Vagina (tissue), 2 donors: ENCODE measurements at regions of chr16 and their contacts with region 1.

Region 1: DNA sequence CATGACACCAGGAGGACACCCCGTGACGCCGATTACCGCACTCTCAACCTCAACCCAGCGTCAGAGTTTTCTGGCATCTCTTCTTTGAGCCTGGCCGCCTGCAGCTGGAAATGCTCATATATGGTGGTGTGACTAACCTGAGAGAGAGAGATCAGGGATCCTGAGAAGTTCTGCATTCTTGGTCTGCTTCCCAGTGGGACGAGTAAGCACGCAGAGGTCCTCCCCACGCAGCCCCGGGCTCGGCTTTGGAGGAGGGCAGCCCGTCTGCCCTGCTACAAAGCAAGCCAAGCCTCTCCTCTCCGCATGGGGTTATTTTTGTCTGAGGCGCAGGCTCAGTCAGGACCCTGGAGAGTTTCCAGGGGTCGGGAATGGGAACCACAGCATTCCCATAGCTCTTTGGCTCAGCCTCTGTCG is 16.5 kb downstream of the CRISPLD2 start:
- DNase-seq: no peak
- H3K4me3 ChIP-seq: peak overlapping the region in 1 of 2 donors; percentile 1
- H3K27ac ChIP-seq: peak overlapping the region; percentile 95
- H3K4me1 ChIP-seq: peaks cover 76% of the 10 kb centered on the region
- H3K27me3 ChIP-seq: no peaks in the 10 kb centered on the region
- CTCF ChIP-seq: no peak
- POLR2A ChIP-seq: no peak

Region 2: DNA sequence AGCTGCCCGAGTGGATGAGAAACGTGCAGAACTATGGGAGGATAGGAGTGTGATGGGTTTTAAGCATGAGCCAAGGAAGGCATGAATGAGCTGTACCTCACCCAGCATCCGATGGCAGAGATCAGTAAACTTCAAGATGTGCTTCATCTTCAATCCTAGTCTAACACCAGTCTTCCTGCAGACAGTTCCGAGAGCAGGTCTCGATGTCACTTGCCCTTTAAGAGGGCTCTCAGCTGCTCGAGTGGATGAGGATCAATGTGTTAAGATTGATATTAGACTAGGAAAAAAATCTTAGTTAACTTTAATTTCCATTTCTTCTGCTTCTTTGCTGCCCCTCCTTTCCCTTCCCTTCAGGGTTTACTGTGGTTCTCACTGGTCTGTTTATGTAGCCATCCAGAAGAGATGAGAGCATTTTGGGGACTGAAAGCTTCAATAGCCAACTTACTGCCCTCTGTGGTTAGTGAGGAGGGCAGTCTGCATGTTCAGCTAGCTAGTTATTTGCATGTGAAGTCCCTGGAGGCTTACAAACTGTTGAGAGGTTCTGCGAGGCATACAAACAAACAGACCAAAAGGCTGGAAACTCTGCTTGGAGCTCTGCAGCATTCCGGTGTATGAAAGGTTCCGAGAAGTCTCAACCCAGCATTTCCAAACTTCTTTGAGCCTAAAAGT is 172.7 kb before region 1 on chr16:
- intact Hi-C with region 1: no loop called
- DNase-seq: no peak
- H3K4me3 ChIP-seq: no peak overlapping the region
- H3K27ac ChIP-seq: no peak overlapping the region
- H3K4me1 ChIP-seq: peaks cover 15% of the 10 kb centered on the region
- H3K27me3 ChIP-seq: no peaks in the 10 kb centered on the region
- CTCF ChIP-seq: no peak
- POLR2A ChIP-seq: no peak

Region 3: DNA sequence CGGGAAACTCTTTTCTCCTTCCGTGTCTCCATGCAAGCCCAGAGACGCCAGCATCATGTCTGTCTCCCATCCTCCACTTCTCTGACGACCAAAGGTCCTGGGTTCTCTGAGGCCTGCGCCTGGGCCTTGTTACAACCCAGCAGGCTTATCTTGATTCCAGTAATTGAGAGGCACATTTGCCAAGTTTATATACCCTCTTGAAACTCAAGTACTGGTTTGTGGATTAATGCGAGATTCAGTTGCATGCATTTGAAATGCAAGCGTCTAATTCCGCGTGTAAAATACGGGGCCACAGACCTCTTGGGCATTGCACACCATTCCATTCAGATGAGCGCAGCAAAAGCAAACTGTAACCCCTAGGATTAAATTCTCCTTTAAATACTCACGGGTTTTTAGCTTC is 45.2 kb before region 1 on chr16:
- intact Hi-C with region 1: loop called (anchors 5 kb)
- DNase-seq: no peak
- H3K4me3 ChIP-seq: no peak overlapping the region
- H3K27ac ChIP-seq: no peak overlapping the region
- H3K4me1 ChIP-seq: peaks cover 15% of the 10 kb centered on the region
- H3K27me3 ChIP-seq: no peaks in the 10 kb centered on the region
- CTCF ChIP-seq: no peak
- POLR2A ChIP-seq: no peak